Thyroid gland (tissue), 4 donors: ENCODE measurements at regions of chr17 and their contacts with region 1.

Region 1: GRCh38 chr17:29931231-29931932 is 1.4 kb upstream of the SSH2 start:
- DNase-seq: peak; percentile 62 to 63
- H3K4me3 ChIP-seq: no peak overlapping the region
- H3K27ac ChIP-seq: peak overlapping the region in 1 of 3 donors; percentile 96
- H3K4me1 ChIP-seq: peaks cover 27 to 28% of the 10 kb centered on the region in 2 donors
- H3K27me3 ChIP-seq: no peaks in the 10 kb centered on the region
- CTCF ChIP-seq: peak; percentile 76 to 86 (median 80)
- POLR2A ChIP-seq: no peak

Region 2: GRCh38 chr17:29699283-29699682 is 232.1 kb before region 1 on chr17:
- intact Hi-C with region 1: no loop called
- DNase-seq: peak; percentile 85 to 87
- H3K4me3 ChIP-seq: no peak overlapping the region
- H3K27ac ChIP-seq: peak overlapping the region; percentile 68 to 96 (median 93)
- H3K4me1 ChIP-seq: peaks cover 28 to 36% of the 10 kb centered on the region in 2 donors
- H3K27me3 ChIP-seq: no peaks in the 10 kb centered on the region
- CTCF ChIP-seq: no peak
- POLR2A ChIP-seq: peak in 1 of 2 donors; percentile 57

Region 3: GRCh38 chr17:29807520-29808351 is 123.6 kb before region 1 on chr17:
- intact Hi-C with region 1: loop called (anchors 5 kb)
- DNase-seq: peak; percentile 65 to 78
- H3K4me3 ChIP-seq: no peak overlapping the region
- H3K27ac ChIP-seq: no peak overlapping the region
- H3K4me1 ChIP-seq: peaks cover 0 to 4% of the 10 kb centered on the region in 2 donors
- H3K27me3 ChIP-seq: no peaks in the 10 kb centered on the region
- CTCF ChIP-seq: peak; percentile 46 to 81 (median 76)
- POLR2A ChIP-seq: no peak

Region 4: GRCh38 chr17:30062372-30062771 is 131.0 kb after region 1 on chr17:
- intact Hi-C with region 1: no loop called
- DNase-seq: no peak
- H3K4me3 ChIP-seq: no peak overlapping the region
- H3K27ac ChIP-seq: no peak overlapping the region
- H3K4me1 ChIP-seq: no peaks in the 10 kb centered on the region
- H3K27me3 ChIP-seq: no peaks in the 10 kb centered on the region
- CTCF ChIP-seq: no peak
- POLR2A ChIP-seq: no peak